Aorta (tissue), 5 donors: ENCODE measurements at regions of chr12 and their contacts with region 1.

Region 1: DNA sequence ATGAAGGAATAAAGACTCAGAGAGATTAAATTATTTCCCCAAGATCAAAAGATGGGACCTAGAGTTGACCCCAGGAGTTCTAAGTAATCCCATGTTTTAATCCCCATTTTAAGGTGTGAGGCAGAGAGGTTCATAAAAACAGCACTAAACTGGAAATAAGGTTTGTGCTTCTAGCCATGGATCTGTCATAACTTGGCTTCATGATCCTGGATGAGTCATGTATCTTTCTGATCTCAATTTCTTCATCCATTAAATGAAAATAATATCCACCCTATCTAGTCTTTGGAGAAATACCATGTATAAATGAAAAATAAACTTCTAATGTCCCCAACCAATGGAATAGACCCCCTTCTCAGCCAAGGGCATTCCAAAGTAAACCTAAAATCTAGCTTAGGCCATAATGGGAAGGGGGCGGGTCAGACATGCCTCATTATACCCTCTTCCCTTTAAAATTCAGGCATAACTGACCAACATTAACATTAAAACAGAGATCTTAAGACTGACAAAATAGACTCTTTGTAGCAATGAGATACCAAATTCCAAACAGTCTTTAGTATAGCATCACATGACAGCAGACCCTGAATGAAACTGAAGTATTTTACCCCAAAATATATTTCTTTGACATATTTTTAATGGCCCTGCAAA is 47.8 kb downstream of the SLC41A2 start:
- DNase-seq: no peak
- ATAC-seq: peak; percentile 73
- H3K4me3 ChIP-seq: no peak overlapping the region
- H3K27ac ChIP-seq: no peak overlapping the region
- H3K4me1 ChIP-seq: peaks cover 0 to 2% of the 10 kb centered on the region in 2 donors
- H3K27me3 ChIP-seq: no peaks in the 10 kb centered on the region

Region 2: DNA sequence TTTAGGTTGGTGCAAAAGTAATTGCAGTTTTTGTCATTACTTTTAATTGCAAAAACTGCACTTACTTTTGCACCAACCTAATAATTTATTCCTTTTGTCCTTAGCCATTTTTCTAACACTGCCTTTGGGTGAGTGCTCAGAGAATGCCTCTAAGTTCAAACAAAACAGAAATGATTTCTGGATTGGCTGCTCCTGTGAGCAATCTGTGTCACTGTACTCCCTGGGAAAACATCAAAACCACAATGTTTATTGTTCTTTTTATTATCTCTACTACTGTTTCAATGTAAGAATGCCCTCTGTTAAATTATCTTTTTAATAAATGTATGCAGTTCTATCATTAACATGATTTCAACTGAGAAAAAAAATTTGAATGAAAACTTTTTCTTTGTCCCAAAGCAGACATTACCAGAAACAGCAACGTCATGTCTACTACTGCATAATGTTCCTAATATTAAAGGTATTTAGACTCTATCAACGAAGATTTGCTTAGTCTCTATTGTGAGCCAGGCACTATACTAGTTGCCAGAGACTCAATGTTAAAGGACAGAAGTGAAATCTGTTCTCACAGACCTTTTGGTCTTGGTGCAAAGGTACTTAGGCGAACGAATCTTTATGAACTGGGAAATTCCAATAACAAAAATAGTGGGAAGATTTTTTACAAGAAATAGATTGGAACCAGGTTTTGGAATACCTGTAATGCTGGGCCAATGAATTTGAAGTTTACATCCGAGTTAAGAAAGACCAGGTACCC is 41.6 kb after region 1 on chr12:
- intact Hi-C with region 1: loop called (anchors 5 to 10 kb)
- DNase-seq: no peak
- ATAC-seq: no peak
- H3K4me3 ChIP-seq: no peak overlapping the region
- H3K27ac ChIP-seq: no peak overlapping the region
- H3K4me1 ChIP-seq: peaks cover 0 to 5% of the 10 kb centered on the region in 2 donors
- H3K27me3 ChIP-seq: no peaks in the 10 kb centered on the region

Region 3: DNA sequence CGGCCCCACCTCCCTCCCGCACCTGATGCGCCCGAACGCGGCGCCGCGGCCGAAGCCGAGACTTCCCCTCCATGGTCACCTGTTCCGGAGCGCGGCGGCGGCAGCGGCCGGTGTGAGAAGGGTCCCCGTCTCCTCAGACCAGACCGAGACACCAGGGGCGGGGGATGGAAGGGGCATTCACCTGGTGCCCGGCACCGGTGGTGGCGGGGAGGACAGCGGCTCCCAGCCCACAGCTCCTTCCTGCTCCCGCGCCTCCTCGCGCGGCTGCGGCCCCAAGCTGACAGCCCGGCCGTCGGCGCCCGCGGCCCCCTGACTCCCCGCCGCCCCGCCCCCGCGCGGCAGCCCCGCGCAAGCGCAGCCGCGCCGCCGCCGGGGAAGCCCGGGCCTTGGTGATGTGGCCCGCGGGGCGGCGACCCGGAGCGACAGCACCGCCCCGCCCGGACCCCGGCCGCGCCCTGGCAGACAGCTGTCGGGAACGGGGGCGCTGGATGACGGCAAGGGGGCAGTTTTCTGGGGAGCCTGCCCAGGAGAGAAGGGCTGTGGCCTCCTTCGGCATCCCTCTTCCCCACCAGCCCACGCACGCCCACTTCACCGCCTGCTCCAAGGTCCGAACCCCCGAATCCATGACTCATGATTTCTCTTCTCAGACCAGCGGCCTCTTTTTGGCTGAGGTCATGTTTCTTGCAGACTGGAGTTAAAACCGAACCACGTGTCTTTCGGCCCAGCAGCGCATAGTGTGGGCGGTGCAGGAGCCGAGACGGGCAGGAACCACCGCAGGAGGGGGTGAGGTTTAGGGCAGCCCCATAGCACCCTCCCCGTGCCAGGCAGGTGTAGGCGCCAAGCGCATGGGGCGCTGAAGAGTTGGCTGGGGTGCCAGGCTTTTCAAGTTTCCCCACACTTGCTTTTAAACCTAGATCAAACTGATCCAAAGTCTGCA is 48.0 kb after region 1 on chr12 and contains the start of gene SLC41A2:
- intact Hi-C with region 1: loop called (anchors 5 to 10 kb)
- DNase-seq: peak; percentile 92
- ATAC-seq: peak; percentile 92
- H3K4me3 ChIP-seq: peak within 1 kb of the TSS; percentile 70 to 78
- H3K27ac ChIP-seq: peak within 1 kb of the TSS; percentile 64 to 84
- H3K4me1 ChIP-seq: no peaks in the 10 kb centered on the region
- H3K27me3 ChIP-seq: no peaks in the 10 kb centered on the region
- total RNA-seq, gene SLC41A2: 96.4 to 106 TPM

Region 4: DNA sequence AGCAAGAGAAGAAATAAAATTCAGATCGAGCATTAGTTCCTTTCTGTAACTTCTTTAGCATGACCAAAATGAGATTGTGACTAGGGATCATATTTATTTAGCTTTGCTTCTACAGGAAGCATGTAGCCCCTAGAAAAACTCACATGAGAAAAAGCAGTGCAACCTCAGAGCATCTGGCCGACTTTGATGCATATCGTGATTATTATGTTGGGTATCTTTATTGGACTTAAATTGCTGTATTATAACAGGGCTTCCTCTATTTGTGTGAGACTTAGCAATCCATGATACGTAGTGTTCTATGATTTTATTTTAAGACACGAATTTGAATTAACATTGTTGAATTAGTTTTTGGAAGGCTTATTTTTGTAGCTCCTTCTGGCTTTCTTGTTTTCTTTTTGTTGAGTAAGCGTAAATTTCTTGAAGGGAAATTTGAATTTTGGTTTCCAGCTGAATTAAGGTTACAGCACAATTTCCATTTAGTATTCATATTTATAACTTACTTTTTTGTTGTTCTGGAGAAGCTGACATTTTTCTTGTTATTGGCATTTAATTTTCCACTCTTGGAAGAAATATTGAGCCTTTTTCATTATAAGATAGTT is 231.1 kb after region 1 on chr12:
- intact Hi-C with region 1: no loop called
- DNase-seq: no peak
- ATAC-seq: no peak
- H3K4me3 ChIP-seq: no peak overlapping the region
- H3K27ac ChIP-seq: no peak overlapping the region
- H3K4me1 ChIP-seq: no peaks in the 10 kb centered on the region
- H3K27me3 ChIP-seq: no peaks in the 10 kb centered on the region